PC-3 (cell line): ENCODE measurements at regions of chr4 and their contacts with region 1.

Region 1: DNA sequence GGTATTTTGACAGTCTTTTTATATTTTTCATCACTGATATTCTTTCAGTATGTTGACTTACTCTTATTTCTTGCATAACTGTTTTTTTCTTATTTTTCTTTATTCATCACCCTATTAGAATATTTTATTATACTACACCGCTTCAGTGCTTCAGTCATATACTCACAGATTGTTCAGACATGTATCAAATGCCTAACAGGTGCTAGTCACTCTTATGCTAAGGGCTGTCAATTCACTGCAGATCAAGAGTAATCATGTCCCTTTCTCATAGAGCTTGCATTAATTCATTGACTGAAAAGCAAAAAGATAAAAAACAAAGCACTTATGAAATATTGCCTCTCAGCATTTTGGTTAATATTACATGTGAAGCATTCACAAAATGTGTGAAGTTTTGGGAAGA is 1435.6 kb downstream of the STIM2 start:
- DNase-seq: no peak
- ATAC-seq: no peak
- H3K4me3 ChIP-seq: no peak overlapping the region
- H3K27ac ChIP-seq: no peak overlapping the region
- H3K4me1 ChIP-seq: no peaks in the 10 kb centered on the region
- H3K27me3 ChIP-seq: no peaks in the 10 kb centered on the region
- CTCF ChIP-seq: no peak

Region 2: DNA sequence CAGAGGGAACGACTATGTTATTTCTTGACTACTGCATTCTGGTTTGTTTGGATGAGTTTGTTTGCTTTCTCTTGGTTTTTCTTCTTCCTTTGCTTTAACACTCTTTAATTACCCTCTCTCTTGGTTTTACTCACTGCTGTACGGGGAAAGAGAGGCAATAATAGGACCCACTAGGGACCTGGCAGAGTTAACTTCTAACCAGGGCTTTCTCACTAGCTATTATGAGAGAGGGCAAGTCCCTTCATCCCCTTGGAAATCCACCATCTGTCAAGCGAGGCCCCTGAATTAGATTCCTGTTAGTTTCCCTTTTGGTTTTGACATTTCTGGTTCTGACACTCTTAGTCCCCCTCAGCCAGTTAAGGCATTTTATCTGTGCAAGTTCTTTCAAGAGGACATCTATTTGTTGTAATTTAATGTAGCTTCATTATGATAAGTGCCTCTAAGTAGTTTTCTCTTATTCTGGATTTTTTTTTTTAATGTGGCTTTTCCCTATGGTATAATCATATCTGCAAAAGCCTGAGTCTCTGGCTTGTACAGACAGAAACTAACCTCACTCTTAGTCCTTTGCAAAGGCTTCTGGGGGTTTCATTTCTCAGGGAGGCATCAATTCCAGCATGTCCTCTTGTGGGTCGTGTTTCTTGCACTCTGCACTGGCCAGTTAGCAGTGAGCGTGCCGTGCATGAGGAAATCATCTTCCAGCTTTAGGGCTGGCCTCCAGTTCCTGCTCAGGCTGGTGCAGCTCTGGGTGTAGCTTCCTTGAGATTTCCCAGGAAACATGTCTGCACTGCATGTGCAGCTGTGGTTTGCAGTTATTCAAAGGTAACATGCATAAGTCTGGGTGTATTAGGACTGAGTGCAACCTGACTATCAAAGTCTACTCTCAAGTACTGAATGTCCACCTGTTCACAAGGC is 1214.3 kb before region 1 on chr4:
- CTCF ChIA-PET with region 1: no interaction called
- POLR2A ChIA-PET with region 1: no interaction called
- intact Hi-C with region 1: no loop called
- DNase-seq: no peak
- ATAC-seq: no peak
- H3K4me3 ChIP-seq: no peak overlapping the region
- H3K27ac ChIP-seq: no peak overlapping the region
- H3K4me1 ChIP-seq: no peaks in the 10 kb centered on the region
- H3K27me3 ChIP-seq: peaks cover 16% of the 10 kb centered on the region
- CTCF ChIP-seq: no peak

Region 3: DNA sequence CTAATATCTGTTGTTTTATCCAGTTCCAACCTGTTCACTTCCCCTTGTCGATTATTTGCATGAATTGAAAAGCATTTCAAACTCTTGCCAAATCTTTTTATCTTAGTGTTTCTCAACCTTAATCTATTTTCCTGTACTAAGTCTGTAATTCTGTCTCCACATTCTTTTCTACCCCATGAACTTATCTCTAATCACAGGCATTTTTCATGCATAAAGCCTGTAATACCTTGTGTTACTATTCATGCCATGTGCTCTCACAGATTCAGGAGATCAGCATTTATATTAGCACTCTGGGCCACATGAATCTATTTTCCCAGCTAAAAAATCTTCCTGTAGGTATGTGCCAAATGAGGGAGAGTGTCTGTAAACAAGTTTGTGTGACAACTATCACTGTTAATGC is 74.7 kb before region 1 on chr4:
- CTCF ChIA-PET with region 1: no interaction called
- POLR2A ChIA-PET with region 1: no interaction called
- intact Hi-C with region 1: no loop called
- DNase-seq: no peak
- ATAC-seq: no peak
- H3K4me3 ChIP-seq: no peak overlapping the region
- H3K27ac ChIP-seq: no peak overlapping the region
- H3K4me1 ChIP-seq: no peaks in the 10 kb centered on the region
- H3K27me3 ChIP-seq: no peaks in the 10 kb centered on the region
- CTCF ChIP-seq: no peak

Region 4: GRCh38 chr4:28357990-28358389 is 61.8 kb after region 1 on chr4:
- CTCF ChIA-PET with region 1: interaction called, 11 read pairs
- POLR2A ChIA-PET with region 1: no interaction called
- intact Hi-C with region 1: no loop called
- DNase-seq: peak; percentile 39
- ATAC-seq: peak; percentile 63
- H3K4me3 ChIP-seq: no peak overlapping the region
- H3K27ac ChIP-seq: no peak overlapping the region
- H3K4me1 ChIP-seq: no peaks in the 10 kb centered on the region
- H3K27me3 ChIP-seq: no peaks in the 10 kb centered on the region
- CTCF ChIP-seq: peak; percentile 53